PC-9 (cell line): ENCODE measurements at regions of chr19 and their contacts with region 1.

Region 1: GRCh38 chr19:20167020-20167644 is at the start of gene ZNF486:
- DNase-seq: peak; percentile 92 to 94
- H3K4me3 ChIP-seq: peak within 1 kb of the TSS; percentile 84
- H3K27ac ChIP-seq: peak within 1 kb of the TSS; percentile 36; the same call in 1 of the 2 replicates
- H3K4me1 ChIP-seq: no peaks in the 10 kb centered on the region; the same call in 1 of the 2 replicates
- H3K27me3 ChIP-seq: no peaks in the 10 kb centered on the region
- CTCF ChIP-seq: no peak
- total RNA-seq, gene ZNF486: 4.8 and 6.6 TPM in 2 replicates

Region 2: GRCh38 chr19:20565321-20566018 is 398.3 kb after region 1 on chr19 and contains the start of gene ZNF737:
- CTCF ChIA-PET with region 1: no interaction called
- POLR2A ChIA-PET with region 1: interaction called, 11 read pairs
- intact Hi-C with region 1: no loop called
- DNase-seq: peak; percentile 88 to 94
- H3K4me3 ChIP-seq: peak within 1 kb of the TSS; percentile 72
- H3K27ac ChIP-seq: peak within 1 kb of the TSS; percentile 31; the same call in 1 of the 2 replicates
- H3K4me1 ChIP-seq: no peaks in the 10 kb centered on the region; the same call in 1 of the 2 replicates
- H3K27me3 ChIP-seq: no peaks in the 10 kb centered on the region
- CTCF ChIP-seq: no peak
- total RNA-seq, gene ZNF737: 5.4 and 6.0 TPM in 2 replicates